ENCODE measurements at regions of chr4 and their contacts with region 1.

Region 1: DNA sequence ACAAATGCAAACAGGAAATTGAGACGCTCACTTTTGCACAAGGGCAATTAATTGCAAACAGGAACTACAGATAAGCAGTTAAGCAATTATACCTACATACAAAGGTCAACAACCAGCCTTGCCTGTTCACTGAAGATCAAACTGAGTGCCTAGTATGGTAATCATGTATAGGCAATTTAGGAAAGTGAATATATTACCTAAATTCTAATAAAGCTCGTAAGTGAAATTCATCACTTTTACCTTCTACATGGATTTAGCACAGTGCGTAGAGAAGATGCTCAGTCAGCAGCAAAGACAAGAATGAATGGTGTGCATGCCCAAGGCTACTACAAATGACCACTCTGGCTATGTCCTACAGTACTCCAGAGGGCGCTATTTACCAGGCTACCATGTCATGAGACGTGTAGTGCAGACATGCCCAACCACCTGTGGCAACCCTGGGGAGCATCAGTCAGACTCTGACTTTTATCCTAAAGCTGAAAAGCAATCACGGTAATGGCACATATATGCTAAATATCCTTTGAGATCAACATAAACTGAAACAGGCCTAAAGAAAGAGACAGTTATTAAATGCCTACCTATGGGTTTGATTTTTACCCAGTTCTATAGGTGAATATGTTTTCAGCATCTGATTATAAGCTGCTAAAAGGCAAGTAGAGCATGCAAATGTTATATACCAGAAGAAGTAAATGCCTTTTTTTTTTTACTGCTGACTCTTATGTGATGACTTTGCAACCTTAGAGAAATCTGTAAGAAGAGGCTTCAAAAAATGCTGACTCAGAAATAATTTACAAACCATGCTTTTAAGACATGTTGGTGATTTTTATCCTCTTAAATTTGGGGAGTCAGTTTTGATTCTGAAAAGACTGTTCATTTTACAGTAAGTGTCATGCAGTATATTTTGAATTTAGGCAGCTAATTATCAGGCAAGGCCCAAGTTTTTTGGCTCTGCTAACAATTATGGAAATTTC is 178.0 kb downstream of the PPP3CA start:
- DNase-seq: peak in 6 of 10 donors; percentile 14 to 70 (median 47)

Region 2: GRCh38 chr4:101730291-101731117 is 561.2 kb after region 1 on chr4:
- intact Hi-C with region 1: loop called (anchors 5 kb)
- DNase-seq: peak in 7 of 10 donors; percentile 13 to 79 (median 46)

Measured in posterior cingulate gyrus (tissue), 11 donors.